AG04449 (cell line): ENCODE measurements at regions of chr12 and their contacts with region 1.

Region 1: DNA sequence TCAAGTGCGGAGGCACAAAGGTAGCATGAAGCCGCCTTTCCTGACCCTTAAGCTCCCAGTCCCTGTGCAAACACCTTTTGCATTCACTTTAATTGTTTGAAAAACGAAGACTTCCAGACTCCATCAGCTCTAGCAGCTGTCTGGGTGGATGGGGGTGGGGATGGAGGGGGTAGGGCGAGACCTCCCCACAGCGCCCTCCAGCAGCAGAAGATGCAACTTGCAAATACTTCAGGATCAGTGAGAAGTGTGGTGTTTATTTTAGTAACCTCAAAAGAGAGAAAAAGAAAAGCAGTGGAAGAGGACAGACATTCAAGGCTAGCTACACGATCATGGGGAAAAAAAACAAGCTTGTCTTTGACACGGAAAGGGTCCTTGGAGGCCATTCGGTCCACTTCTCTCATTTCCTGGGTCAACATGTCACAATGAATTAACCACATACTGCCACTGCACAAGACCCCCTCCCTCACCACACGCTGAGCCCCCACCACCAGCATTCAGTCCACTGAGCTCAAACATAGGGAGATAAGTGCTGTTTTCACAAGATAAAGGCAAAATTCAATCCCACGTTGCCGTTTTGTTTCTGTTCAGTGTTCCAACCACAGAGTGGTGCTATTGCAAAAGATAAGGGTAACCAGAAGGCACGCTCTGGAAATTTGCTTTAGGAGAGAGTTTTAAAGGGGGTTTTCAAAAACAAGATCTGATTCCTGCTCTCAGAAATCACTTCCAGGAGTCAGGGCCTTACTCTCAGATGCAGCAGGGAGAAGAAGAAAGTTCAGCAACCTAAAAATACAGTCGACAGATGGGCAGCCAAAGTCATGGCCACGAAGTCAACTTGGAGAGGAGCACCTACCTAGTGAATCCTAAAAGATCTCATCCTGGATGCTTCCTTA is 3.3 kb upstream of the NTF3 start:
- DNase-seq: no peak
- H3K4me3 ChIP-seq: peak overlapping the region; percentile 18; the same call in 1 of the 2 replicates
- CTCF ChIP-seq: peak; percentile 62

Region 2: GRCh38 chr12:5171701-5172100 is 256.9 kb before region 1 on chr12:
- CTCF ChIA-PET with region 1: interaction called, 32 read pairs
- POLR2A ChIA-PET with region 1: interaction called, 4 read pairs
- DNase-seq: no peak
- H3K4me3 ChIP-seq: no peak overlapping the region
- CTCF ChIP-seq: peak; percentile 61

Region 3: DNA sequence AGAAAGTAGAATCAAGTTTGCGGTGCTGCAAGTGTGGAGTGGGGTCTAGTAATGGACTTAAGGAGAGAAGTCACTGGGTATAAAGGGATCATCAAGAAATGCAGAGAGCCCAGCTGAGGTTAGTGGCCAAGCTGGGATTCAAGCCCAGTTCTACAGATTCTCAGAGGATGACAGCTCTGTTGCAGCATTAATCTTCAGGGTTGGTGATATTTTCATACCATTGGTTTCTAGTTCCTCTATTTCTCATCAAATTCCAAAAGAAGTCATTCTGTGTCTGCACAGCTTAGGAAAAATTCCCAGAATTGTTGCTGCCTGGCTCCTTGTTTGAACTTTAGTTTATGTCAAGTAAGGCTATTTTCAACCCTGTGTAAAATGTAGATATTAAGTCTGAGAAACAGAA is 166.1 kb before region 1 on chr12:
- CTCF ChIA-PET with region 1: no interaction called
- POLR2A ChIA-PET with region 1: no interaction called
- DNase-seq: peak; percentile 81
- H3K4me3 ChIP-seq: no peak overlapping the region
- CTCF ChIP-seq: no peak

Region 4: GRCh38 chr12:5417500-5417899 is 11.1 kb before region 1 on chr12:
- CTCF ChIA-PET with region 1: interaction called, 31 read pairs
- POLR2A ChIA-PET with region 1: interaction called, 4 read pairs
- DNase-seq: peak; percentile 37
- H3K4me3 ChIP-seq: no peak overlapping the region
- CTCF ChIP-seq: no peak

Region 5: GRCh38 chr12:5506821-5507231 is 78.2 kb after region 1 on chr12:
- CTCF ChIA-PET with region 1: interaction called, 33 read pairs
- POLR2A ChIA-PET with region 1: no interaction called
- DNase-seq: no peak
- H3K4me3 ChIP-seq: no peak overlapping the region
- CTCF ChIP-seq: no peak

Region 6: DNA sequence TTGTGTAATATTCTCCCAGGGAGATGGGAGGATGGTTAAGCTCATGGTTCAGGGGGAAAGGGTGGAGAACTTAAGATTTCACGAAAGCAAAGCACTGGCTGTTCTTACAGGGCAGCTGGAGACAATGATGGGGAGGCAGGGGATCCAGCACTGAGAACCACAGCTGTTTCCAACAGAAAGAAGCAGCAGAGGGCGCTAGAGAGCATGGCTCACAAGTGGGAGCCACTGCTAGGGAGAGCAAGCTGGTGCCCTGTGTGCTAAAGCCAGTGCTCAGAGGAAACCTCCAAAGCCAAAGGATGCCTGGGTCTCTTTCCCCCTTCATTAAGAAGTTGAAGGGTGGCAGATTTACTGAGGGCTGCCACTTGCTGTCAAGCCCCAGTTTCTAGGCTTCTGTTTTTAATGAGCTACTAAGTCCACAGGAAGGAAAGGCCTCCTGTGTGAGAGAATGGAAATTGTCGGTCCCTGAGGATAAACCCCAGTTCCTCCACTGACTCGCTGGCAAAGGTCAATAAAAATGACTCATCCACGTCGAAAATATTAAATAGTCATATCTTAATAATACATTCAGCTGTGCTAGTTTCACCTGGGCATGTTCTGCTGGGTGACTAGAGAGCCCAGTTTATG is 316.8 kb after region 1 on chr12:
- CTCF ChIA-PET with region 1: interaction called, 30 read pairs
- POLR2A ChIA-PET with region 1: interaction called, 4 read pairs
- DNase-seq: no peak
- H3K4me3 ChIP-seq: no peak overlapping the region
- CTCF ChIP-seq: peak; percentile 88

Region 7: DNA sequence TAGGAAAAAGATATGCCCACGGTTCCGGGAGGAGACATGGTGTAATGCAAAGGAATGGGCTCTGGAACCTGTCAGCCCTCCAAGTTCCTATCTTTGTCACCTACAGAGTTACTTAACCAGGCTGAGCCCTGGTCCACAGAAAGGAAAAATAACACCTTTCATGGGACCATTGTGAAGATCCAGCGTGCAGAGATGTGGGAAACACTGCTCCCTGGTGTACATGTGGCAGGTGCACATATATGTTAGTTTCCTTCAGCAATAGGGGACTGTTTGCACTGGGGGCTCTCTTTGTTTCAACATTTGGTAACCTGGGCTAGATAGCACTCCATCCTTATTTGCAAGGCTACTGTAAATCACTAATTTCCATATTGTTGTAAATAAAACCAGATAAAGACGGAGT is 444.2 kb after region 1 on chr12:
- CTCF ChIA-PET with region 1: interaction called, 44 read pairs
- POLR2A ChIA-PET with region 1: no interaction called
- DNase-seq: no peak
- H3K4me3 ChIP-seq: no peak overlapping the region
- CTCF ChIP-seq: peak; percentile 44